CD8-positive, alpha-beta memory T cell (primary cell): ENCODE measurements at regions of chr1 and their contacts with region 1.

Region 1: GRCh38 chr1:222617367-222617951 is 438 bp upstream of the MIA3 start:
- DNase-seq: peak; percentile 92 to 98 (median 95)
- H3K4me3 ChIP-seq: peak overlapping the region; percentile 66
- H3K4me3 Mint-ChIP-seq: peak overlapping the region; percentile 92 to 99 (median 96)
- H3K27ac ChIP-seq: peak overlapping the region; percentile 80
- H3K27ac Mint-ChIP-seq: peak overlapping the region; percentile 96 to 100 (median 98)
- H3K4me1 ChIP-seq: peaks cover 20% of the 10 kb centered on the region
- H3K4me1 Mint-ChIP-seq: peaks cover 34 to 38% (median 35%) of the 10 kb centered on the region in 3 donors
- H3K27me3 ChIP-seq: no peaks in the 10 kb centered on the region
- H3K27me3 Mint-ChIP-seq: peaks cover 16 to 27% of the 10 kb centered on the region in 2 donors

Region 2: GRCh38 chr1:222643938-222644635 is 26.6 kb after region 1 on chr1:
- CTCF ChIA-PET with region 1: interaction called, 3 read pairs
- POLR2A ChIA-PET with region 1: interaction called, 11 read pairs
- DNase-seq: peak; percentile 96 to 99 (median 98)
- H3K4me3 ChIP-seq: peak overlapping the region; percentile 99
- H3K4me3 Mint-ChIP-seq: peak overlapping the region; percentile 92 to 100 (median 98)
- H3K27ac ChIP-seq: peak overlapping the region; percentile 99
- H3K27ac Mint-ChIP-seq: peak overlapping the region; percentile 97 to 100 (median 99)
- H3K4me1 ChIP-seq: peaks cover 20% of the 10 kb centered on the region
- H3K4me1 Mint-ChIP-seq: peaks cover 33 to 51% (median 50%) of the 10 kb centered on the region in 3 donors
- H3K27me3 ChIP-seq: no peaks in the 10 kb centered on the region
- H3K27me3 Mint-ChIP-seq: no peaks in the 10 kb centered on the region

Region 3: DNA sequence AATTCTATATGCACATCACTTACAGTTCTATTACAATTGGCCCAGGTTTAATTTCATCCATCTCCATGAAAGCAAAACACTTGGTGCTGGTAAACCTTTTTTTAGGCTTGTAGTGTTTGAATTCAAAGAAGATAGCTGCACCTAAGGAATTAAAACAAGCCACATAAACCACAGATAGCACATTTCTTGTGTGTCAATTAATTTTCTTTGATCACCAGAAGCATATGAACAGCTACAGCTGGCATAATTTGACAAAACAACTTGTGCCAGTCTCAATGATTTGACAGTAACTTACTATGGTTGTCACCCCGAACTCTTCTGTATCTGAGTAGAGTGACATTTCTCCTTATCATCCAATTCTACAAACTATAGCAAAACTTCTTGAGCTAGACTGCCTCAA is 52.7 kb after region 1 on chr1:
- CTCF ChIA-PET with region 1: no interaction called
- POLR2A ChIA-PET with region 1: no interaction called
- DNase-seq: peak in 1 of 5 donors; percentile 14
- H3K4me3 ChIP-seq: no peak overlapping the region
- H3K4me3 Mint-ChIP-seq: no peak overlapping the region
- H3K27ac ChIP-seq: no peak overlapping the region
- H3K27ac Mint-ChIP-seq: peak overlapping the region in 7 of 8 donors; percentile 48 to 84 (median 65)
- H3K4me1 ChIP-seq: peaks cover 8% of the 10 kb centered on the region
- H3K4me1 Mint-ChIP-seq: peaks cover 14 to 28% (median 21%) of the 10 kb centered on the region in 3 donors
- H3K27me3 ChIP-seq: no peaks in the 10 kb centered on the region
- H3K27me3 Mint-ChIP-seq: no peaks in the 10 kb centered on the region